ENCODE measurements at regions of chr7 and their contacts with region 1.

Region 1: GRCh38 chr7:5363729-5364128 is 59.9 kb downstream of the TNRC18 start:
- DNase-seq: no peak
- H3K4me3 ChIP-seq: no peak overlapping the region
- H3K27ac ChIP-seq: no peak overlapping the region
- H3K4me1 ChIP-seq: peaks cover 8 to 20% of the 10 kb centered on the region in 2 donors
- H3K27me3 ChIP-seq: no peaks in the 10 kb centered on the region
- CTCF ChIP-seq: no peak
- POLR2A ChIP-seq: no peak

Region 2: GRCh38 chr7:5248201-5248885 is 115.4 kb before region 1 on chr7:
- intact Hi-C with region 1: loop called (anchors 10 kb)
- DNase-seq: no peak
- H3K4me3 ChIP-seq: no peak overlapping the region
- H3K27ac ChIP-seq: no peak overlapping the region
- H3K4me1 ChIP-seq: no peaks in the 10 kb centered on the region
- H3K27me3 ChIP-seq: no peaks in the 10 kb centered on the region
- CTCF ChIP-seq: no peak
- POLR2A ChIP-seq: no peak

Region 3: DNA sequence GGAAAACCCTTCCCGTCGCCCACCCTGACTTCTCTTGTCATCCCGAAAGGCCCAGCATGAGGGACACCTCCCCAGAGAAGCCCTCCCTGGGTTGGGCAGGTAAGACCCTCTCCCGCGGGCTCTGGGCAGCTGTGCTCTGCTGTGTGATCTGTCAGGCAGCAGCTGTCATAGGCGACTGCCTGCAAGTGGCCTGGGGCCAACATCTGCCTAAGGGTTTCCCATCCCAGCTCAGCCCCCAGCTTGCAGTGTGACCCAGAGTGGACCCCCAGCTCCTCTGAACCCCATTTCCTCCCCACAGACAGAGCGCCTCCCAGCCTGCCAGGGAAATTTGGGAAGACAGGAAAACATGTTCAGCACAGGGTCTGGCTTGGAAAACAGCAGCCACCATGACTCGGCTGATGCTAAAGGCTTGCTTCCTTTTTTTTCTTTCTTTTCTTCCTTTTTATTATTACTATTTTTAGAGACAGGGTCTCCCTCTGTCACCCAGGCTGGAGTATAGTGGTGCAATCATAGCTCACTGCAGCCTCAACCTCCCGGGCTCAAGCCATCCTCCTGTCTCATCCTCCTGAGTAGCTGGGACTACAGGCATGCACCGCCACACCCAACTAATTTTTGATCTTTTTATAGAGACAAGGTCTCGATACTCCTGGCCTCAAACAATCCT is 78.2 kb after region 1 on chr7:
- intact Hi-C with region 1: loop called (anchors 5 kb)
- DNase-seq: no peak
- H3K4me3 ChIP-seq: no peak overlapping the region
- H3K27ac ChIP-seq: no peak overlapping the region
- H3K4me1 ChIP-seq: peaks cover 14 to 23% of the 10 kb centered on the region in 2 donors
- H3K27me3 ChIP-seq: no peaks in the 10 kb centered on the region
- CTCF ChIP-seq: no peak
- POLR2A ChIP-seq: no peak

Measured in thyroid gland (tissue), 4 donors.